GM23248 (cell line): ENCODE measurements at regions of chr6 and their contacts with region 1.

Region 1: GRCh38 chr6:161618831-161619454 is 345.1 kb upstream of the AGPAT4 start:
- DNase-seq: peak; percentile 87
- H3K4me3 ChIP-seq: peak overlapping the region; percentile 62
- H3K27ac ChIP-seq: no peak overlapping the region
- H3K4me1 ChIP-seq: no peaks in the 10 kb centered on the region
- H3K27me3 ChIP-seq: no peaks in the 10 kb centered on the region

Region 2: DNA sequence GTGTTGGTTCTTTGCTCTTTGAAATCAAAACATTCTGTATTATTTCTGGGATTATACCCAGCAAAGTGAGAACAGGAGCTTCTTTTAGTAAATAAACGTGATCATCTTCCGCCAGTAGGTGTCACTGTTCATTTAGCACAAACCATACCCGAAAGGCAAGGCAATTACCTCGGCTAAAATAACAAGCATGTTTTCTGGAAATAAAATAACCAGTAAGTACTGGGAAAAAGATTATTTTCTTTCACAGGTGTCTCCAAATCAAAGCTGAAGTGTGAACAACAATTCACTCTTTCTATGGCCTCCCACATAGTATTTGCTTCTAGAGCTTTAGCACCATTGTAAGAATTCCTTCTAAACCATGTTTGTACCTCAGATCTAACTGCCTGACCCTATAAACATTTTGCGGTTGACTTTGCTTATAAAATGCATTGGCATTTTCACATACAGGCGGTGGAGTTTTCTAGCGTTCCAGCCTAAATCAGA is 200.4 kb before region 1 on chr6:
- in situ Hi-C with region 1: loop called (anchors 10 kb)
- DNase-seq: peak; percentile 83
- H3K4me3 ChIP-seq: no peak overlapping the region
- H3K27ac ChIP-seq: peak overlapping the region; percentile 73
- H3K4me1 ChIP-seq: peaks cover 23% of the 10 kb centered on the region
- H3K27me3 ChIP-seq: no peaks in the 10 kb centered on the region